Psoas muscle (tissue), 8 donors: ENCODE measurements at regions of chr11 and their contacts with region 1.

Region 1: GRCh38 chr11:31956310-31956709 is 134.6 kb upstream of the RCN1 start:
- DNase-seq: no peak
- ATAC-seq: no peak
- H3K4me3 ChIP-seq: no peak overlapping the region
- H3K27ac ChIP-seq: no peak overlapping the region
- H3K4me1 ChIP-seq: no peaks in the 10 kb centered on the region
- H3K27me3 ChIP-seq: no peaks in the 10 kb centered on the region
- CTCF ChIP-seq: no peak

Region 2: GRCh38 chr11:31303644-31304180 is 652.6 kb before region 1 on chr11:
- intact Hi-C with region 1: loop called in 1 of 2 experiments (anchors 2 kb)
- DNase-seq: no peak
- ATAC-seq: no peak
- H3K4me3 ChIP-seq: no peak overlapping the region
- H3K27ac ChIP-seq: no peak overlapping the region
- H3K4me1 ChIP-seq: no peaks in the 10 kb centered on the region
- H3K27me3 ChIP-seq: no peaks in the 10 kb centered on the region
- CTCF ChIP-seq: no peak